Dorsolateral prefrontal cortex (tissue), 120 donors: ENCODE measurements at regions of chr12 and their contacts with region 1.

Region 1: DNA sequence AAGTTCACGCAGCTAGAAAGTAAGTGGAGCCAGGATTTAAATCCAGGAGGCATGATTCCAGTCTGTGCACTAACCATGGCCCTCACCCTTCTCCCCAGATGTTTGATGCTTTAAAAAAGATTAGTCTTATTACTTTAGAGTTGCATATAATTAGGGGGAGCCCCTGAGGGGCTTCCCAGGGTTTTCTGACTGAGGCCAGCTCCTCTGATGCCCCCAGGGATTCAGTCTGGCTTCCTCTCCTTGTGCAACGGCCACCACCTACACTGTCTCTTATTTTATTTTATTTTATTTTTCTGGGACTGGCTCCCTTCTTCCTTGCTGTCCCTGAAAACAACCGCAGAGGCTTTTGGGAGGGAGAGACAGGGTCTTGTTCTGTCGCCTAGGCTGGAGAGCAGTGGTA is 22.6 kb downstream of the CLSTN3 start:
- DNase-seq: no peak
- H3K4me3 ChIP-seq: no peak overlapping the region
- H3K27ac ChIP-seq: peak overlapping the region in 15 of 59 donors; percentile 5 to 53 (median 31)
- H3K27me3 ChIP-seq: no peaks in the 10 kb centered on the region
- CTCF ChIP-seq: no peak

Region 2: GRCh38 chr12:7175493-7175892 is 22.7 kb after region 1 on chr12:
- intact Hi-C with region 1: loop called in 1 of 2 experiments (anchors 1 kb)
- DNase-seq: no peak
- H3K4me3 ChIP-seq: no peak overlapping the region
- H3K27ac ChIP-seq: no peak overlapping the region
- H3K27me3 ChIP-seq: peaks cover 0 to 7% (median 0%) of the 10 kb centered on the region in 45 donors
- CTCF ChIP-seq: no peak